K562 (cell line): ENCODE measurements at regions of chr7 and their contacts with region 1.

Region 1: DNA sequence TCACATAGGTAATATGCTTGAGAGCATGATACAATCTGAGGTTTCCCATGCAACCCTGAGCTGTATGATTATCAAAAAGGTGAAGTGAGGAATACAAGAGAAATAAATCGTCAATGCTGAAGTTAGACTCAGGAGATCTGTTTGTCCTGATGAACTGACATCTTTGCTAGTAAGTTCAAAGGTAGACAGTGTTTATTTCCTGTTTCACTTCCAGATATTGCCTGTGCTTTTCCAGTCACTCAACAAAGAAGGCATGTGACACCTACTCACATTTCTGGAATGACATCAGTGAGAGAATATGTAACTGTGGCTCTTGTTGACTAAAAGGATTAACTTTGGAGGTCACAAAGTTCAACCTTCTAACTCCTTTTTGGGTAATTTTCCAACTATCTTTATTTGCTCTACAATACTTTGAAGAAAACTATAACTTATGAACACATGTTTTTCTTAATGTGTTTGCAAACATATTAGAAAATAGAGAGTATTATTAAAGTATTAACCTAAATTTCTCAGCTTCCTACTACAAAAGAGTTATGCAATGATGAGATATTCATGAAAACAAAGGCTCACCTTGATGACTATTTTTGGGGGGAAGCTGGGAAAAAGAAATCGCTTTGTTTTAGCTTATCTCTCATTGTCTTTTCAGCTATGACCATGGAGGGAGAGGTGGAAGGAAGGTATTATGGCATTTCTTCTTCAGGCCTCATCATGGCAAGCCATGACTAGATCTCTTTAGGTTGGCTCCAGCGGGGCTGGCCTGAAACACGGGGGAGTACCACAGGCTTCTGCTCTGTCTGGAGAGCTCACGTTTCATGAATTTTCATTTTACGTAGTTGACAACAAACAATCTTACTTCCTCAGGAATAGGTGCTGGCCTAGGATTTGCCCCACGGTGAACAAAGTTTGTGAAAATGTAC is 214.7 kb upstream of the SLC26A5 start:
- DNase-seq: peak in 2 of 4 experiments; percentile 32 to 72
- ATAC-seq: peak; percentile 57
- H3K4me3 ChIP-seq: no peak overlapping the region
- H3K27ac ChIP-seq: peak overlapping the region; percentile 71
- H3K4me1 ChIP-seq: peaks cover 10 to 53% of the 10 kb centered on the region in 2 experiments
- H3K27me3 ChIP-seq: no peaks in the 10 kb centered on the region
- CTCF ChIP-seq: no peak
- EP300 ChIP-seq: peak; percentile 82
- POLR2A ChIP-seq: no peak
- RAD21 ChIP-seq: 0 out of 4 replicates have a peak, but pooled peaks of 1 of the 2 experiments have one; percentile 2

Region 2: DNA sequence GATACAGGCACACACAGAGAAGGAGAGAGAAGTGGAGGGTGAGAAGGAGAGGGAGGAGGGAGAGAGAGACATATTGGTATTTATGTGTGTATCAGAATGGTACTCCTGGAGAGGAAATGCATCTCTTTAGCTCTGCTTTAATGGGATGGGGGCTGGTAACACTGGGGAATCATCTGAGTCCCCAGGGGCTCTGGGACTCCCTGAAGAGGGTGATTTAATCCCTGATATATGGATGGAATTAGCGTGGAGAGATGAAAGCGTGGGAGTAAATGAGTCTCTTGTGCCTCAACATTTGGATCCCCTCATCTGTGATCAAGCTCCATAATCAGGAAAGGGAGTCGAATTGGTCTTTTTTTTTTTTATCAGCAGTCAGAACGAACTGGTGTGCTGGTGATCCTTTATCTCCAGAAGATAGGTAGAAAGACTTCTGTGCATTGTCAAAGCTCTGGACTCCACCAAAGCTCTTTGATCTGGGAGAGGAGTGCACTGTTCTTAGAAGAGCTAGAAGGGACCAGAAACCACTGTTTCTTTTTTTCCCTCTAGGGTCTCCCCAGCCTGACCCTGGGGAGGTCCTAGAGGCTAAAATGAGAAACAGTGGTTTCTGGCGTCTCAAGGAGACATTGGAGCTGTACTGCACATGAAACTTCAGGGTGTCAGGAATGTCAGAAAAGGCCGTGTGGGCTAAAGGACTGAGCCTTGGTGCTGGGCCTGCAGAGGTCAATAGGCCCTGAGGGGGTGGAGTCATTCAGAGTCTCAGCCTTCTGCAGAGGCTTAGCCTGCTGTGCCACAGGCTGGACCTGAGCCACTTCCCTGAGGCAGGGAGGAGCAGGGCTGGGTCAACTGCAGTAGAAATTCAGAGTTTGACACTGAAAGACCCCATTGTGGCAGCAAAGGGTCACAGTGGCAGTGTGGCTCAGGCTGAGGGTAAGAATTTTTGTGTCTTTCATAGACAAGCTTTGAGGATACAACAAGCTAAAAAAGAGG is 19.7 kb after region 1 on chr7:
- CTCF ChIA-PET with region 1: no interaction called
- POLR2A ChIA-PET with region 1: interaction called, 10 read pairs
- in situ Hi-C with region 1: no loop called
- intact Hi-C with region 1: no loop called
- DNase-seq: peak in 3 of 4 experiments; percentile 20 to 82 (median 61)
- ATAC-seq: peak; percentile 99
- H3K4me3 ChIP-seq: no peak overlapping the region
- H3K27ac ChIP-seq: peak overlapping the region; percentile 51; the same call in 2 of the 3 replicates
- H3K4me1 ChIP-seq: peaks cover 4 to 13% of the 10 kb centered on the region in 2 experiments; a peak in 4 of 5 replicates
- H3K27me3 ChIP-seq: no peaks in the 10 kb centered on the region
- CTCF ChIP-seq: no peak
- EP300 ChIP-seq: no peak
- POLR2A ChIP-seq: no peak
- RAD21 ChIP-seq: no peak

Region 3: GRCh38 chr7:103996639-103997038 is 335.9 kb after region 1 on chr7:
- CTCF ChIA-PET with region 1: no interaction called
- POLR2A ChIA-PET with region 1: no interaction called
- in situ Hi-C with region 1: no loop called
- intact Hi-C with region 1: loop called (anchors 5 kb)
- DNase-seq: peak in 1 of 4 experiments; percentile 24
- ATAC-seq: no peak
- H3K4me3 ChIP-seq: no peak overlapping the region
- H3K27ac ChIP-seq: peak overlapping the region; percentile 51
- H3K4me1 ChIP-seq: peaks cover 5 to 44% of the 10 kb centered on the region in 2 experiments
- H3K27me3 ChIP-seq: no peaks in the 10 kb centered on the region
- CTCF ChIP-seq: no peak
- EP300 ChIP-seq: no peak
- POLR2A ChIP-seq: no peak
- RAD21 ChIP-seq: no peak